Activated CD4-positive, alpha-beta T cell treated with anti-CD3 and anti-CD28 coated beads, Interleukin-2, amount 10 ng/mL, durations not matched to agents 7 days and 5 days (primary cell): ENCODE measurements at regions of chr3 and their contacts with region 1.

Region 1: DNA sequence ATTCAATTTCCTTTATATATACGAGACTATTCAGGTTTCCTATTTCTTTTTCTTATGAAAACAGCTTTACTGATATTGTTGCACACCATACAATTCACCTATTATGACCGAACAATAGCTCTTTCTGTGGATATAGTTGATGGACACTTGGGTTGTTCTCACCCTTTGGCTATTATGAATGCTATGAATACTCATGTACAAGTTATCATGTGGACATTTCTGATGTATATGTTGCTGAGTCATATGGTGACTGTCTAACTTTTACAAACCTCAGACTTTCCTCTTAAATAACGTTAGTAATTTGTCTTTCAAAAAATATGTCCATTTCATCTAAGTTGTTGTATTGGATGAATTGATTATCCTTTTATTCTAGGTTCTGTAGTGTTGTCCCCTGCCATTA is 15.7 kb upstream of the USF3 start:
- DNase-seq: no peak
- H3K4me3 Mint-ChIP-seq: no peak overlapping the region
- H3K27ac Mint-ChIP-seq: no peak overlapping the region
- H3K4me1 Mint-ChIP-seq: peaks cover 1% of the 10 kb centered on the region
- H3K27me3 Mint-ChIP-seq: peaks cover 19% of the 10 kb centered on the region

Region 2: DNA sequence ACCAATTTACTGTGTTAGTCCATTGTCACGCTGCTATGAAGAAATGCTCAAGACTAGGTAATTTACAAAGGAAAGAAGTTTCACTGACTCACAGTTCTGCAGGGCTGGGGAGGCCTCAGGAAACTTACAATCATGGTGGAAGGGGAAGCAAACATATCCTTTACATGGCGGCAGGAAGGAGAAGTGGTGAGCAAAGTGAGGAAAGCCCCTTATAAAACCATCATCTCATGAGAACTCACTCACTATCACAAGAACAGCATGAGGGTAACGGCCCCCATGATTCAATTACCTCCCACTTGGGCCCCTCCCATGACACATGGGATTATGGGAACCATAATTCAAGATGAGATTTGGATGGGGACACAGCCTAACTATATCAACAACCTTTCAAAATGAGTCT is 35.9 kb before region 1 on chr3:
- CTCF ChIA-PET with region 1: no interaction called
- POLR2A ChIA-PET with region 1: interaction called, 11 read pairs
- DNase-seq: no peak
- H3K4me3 Mint-ChIP-seq: no peak overlapping the region
- H3K27ac Mint-ChIP-seq: no peak overlapping the region
- H3K4me1 Mint-ChIP-seq: no peaks in the 10 kb centered on the region
- H3K27me3 Mint-ChIP-seq: no peaks in the 10 kb centered on the region

Region 3: DNA sequence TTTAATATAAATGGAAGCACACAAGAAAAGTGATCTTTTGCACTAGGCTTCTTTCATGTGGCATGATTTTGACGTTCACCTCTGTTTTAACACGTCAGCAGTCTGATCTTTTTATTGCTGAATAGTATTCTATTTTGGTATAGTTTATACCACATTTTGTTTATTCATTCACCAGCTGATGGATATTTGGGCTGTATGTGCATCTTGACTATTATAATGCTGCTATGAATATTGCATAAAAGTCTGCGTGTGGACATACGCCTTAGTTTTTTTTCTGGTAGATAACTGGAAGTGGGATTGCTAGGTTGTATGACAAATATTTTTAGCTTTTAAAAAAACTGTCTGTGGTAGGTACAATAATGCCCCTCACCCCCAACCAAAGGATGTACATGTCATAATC is 19.6 kb after region 1 on chr3:
- CTCF ChIA-PET with region 1: no interaction called
- POLR2A ChIA-PET with region 1: no interaction called
- DNase-seq: no peak
- H3K4me3 Mint-ChIP-seq: no peak overlapping the region
- H3K27ac Mint-ChIP-seq: peak overlapping the region; percentile 12
- H3K4me1 Mint-ChIP-seq: peaks cover 35% of the 10 kb centered on the region
- H3K27me3 Mint-ChIP-seq: no peaks in the 10 kb centered on the region